K562 (cell line): ENCODE measurements at regions of chr10 and their contacts with region 1.

Region 1: DNA sequence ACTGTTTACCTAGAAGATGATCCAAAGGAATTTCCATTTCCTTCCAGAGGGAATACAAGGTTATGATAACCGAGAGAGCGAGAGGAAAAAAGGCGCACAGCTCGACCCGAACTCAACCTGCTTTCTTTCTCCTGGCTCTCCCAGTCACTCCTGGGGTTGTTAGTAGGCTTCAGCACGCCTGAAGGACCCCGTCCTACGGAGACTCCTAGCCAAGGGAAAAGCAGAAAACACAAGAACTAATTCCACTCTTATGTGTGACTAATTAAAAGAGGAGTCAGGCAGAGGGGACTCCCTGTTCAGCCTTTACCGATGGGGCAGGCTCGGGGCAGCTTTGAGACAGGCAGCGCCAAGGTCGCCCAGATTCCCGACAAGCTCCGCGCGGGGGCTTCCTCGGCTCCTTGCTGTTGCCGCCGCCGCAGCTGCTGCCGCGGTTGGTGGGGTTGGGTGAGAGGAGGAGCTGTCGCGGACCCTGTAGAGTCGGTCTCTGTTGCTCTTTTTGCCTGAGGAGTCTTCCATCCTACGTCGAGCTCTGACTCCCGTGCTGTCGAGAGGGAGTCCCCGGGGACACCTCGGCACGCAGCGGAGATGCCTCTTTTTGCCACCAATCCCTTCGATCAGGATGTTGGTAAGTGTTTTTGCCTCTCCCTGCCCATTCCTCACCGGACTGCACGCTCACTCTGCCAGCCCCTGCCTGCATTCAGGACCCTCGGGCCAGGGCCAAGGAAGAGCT is at the start of gene STAM:
- DNase-seq: peak; percentile 87 to 94 (median 90)
- ATAC-seq: peak; percentile 88
- H3K4me3 ChIP-seq: peak within 1 kb of the TSS; percentile 98
- H3K27ac ChIP-seq: peak within 1 kb of the TSS; percentile 99
- H3K4me1 ChIP-seq: peaks cover 0 to 24% of the 10 kb centered on the region in 2 experiments; a peak in 2 of 5 replicates
- H3K27me3 ChIP-seq: no peaks in the 10 kb centered on the region
- CTCF ChIP-seq: no peak
- EP300 ChIP-seq: no peak
- POLR2A ChIP-seq: peak; percentile 92
- RAD21 ChIP-seq: no peak; a peak in 1 of 4 replicates
- polyA plus RNA-seq, gene STAM: 21.3 to 25.9 TPM

Region 2: DNA sequence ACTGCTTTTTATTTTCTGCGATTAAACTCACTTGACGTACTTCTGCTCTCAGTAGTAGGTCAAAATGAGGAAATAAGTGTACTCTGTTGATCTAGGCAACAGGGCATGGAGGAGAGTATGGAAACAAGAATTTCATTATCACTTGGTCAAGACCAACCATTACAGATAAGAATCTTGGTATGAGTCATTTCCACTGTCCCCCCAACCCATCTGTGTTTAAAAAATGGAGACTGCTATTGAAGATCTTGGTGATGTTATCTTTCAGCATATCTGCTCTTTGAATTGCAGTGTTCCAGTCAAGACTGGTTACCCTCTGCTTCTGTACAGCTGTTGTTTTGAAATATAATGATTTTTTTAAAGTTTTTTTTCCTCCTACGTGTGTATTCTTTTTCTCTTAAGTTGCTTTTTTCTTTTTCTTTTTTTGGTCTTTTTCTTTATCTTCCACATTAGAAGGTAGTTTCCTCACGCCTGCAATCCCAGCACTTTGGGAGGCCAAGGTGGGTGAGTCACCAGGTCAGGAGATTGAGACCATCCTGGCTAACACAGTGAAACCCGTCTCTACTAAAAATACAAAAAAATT is 11.7 kb after region 1 on chr10:
- CTCF ChIA-PET with region 1: no interaction called
- POLR2A ChIA-PET with region 1: interaction called, 12 read pairs
- in situ Hi-C with region 1: no loop called
- intact Hi-C with region 1: no loop called
- DNase-seq: peak; percentile 24 to 48 (median 33)
- ATAC-seq: peak; percentile 43
- H3K4me3 ChIP-seq: no peak overlapping the region
- H3K27ac ChIP-seq: peak overlapping the region; percentile 34; the same call in 1 of the 3 replicates
- H3K4me1 ChIP-seq: peaks cover 20 to 52% of the 10 kb centered on the region in 2 experiments
- H3K27me3 ChIP-seq: no peaks in the 10 kb centered on the region
- CTCF ChIP-seq: no peak
- EP300 ChIP-seq: peak; percentile 65
- POLR2A ChIP-seq: no peak
- RAD21 ChIP-seq: no peak

Region 3: GRCh38 chr10:17662193-17663138 is 18.5 kb after region 1 on chr10:
- CTCF ChIA-PET with region 1: no interaction called
- POLR2A ChIA-PET with region 1: interaction called, 9 read pairs
- in situ Hi-C with region 1: no loop called
- intact Hi-C with region 1: loop called (anchors 2 kb)
- DNase-seq: peak in 3 of 4 experiments; percentile 23 to 95 (median 76)
- ATAC-seq: peak; percentile 85
- H3K4me3 ChIP-seq: no peak overlapping the region
- H3K27ac ChIP-seq: peak overlapping the region; percentile 63
- H3K4me1 ChIP-seq: peaks cover 8 to 59% of the 10 kb centered on the region in 2 experiments
- H3K27me3 ChIP-seq: no peaks in the 10 kb centered on the region
- CTCF ChIP-seq: no peak
- EP300 ChIP-seq: peak; percentile 99
- POLR2A ChIP-seq: no peak
- RAD21 ChIP-seq: 0 out of 4 replicates have a peak, but pooled peaks of 1 of the 2 experiments have one; percentile 9